ENCODE measurements at regions of chr1 and their contacts with region 1.

Region 1: DNA sequence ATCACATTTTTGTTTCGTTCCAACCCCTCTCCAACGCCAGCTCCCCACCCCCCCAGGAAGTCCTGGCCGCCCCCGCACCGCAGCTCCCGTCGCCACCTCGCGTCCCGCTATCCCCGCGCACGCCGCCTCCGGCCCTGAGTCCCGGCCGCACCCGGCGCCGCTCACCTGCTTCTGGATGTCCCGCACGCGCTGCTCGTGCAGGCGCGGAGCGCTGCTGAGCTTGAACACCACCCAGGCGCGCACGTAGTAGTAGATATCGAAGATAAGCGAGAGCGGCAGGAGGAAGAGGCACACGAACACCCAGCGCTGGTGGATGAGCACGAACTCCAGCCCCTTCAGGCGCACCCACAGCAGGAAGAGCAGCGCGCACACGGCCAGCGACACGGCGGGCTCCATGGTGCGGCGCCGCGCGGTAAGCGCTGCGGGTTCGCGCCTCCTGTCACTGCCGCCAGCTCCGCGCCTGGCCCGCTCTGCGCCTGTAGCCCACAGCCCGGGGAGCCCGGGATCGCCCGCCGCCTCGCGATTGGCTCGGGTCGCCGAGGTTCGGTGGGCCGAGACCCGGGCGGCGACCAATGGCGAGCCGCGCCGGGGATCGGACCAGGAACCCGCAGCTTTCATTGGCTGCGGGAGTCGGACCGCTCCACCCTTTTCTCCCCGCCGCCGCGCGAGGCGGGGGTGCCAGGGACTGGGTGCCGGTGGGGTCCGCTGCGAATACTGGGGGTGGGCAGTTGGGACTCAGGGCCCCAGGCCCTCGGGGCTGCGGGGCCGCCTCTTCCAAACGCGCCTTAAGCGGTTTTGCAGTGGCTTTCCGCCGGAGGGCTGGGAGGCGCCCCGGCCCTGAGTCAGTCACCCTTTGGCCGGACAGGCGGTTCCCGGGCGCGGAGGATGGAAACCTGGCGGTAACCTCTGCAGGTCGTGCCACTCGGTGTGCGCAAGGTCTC is at the start of gene DHCR24:
- DNase-seq: peak; percentile 90 to 98 (median 95)
- H3K4me3 ChIP-seq: peak within 1 kb of the TSS; percentile 64 to 98 (median 91)
- H3K27ac ChIP-seq: peak within 1 kb of the TSS; percentile 20 to 97 (median 91)
- H3K27me3 ChIP-seq: no peaks in the 10 kb centered on the region
- CTCF ChIP-seq: peak in 12 of 56 donors; percentile 6 to 38 (median 22)
- total RNA-seq, gene DHCR24: 81.5 to 336 (median 168) TPM

Region 2: DNA sequence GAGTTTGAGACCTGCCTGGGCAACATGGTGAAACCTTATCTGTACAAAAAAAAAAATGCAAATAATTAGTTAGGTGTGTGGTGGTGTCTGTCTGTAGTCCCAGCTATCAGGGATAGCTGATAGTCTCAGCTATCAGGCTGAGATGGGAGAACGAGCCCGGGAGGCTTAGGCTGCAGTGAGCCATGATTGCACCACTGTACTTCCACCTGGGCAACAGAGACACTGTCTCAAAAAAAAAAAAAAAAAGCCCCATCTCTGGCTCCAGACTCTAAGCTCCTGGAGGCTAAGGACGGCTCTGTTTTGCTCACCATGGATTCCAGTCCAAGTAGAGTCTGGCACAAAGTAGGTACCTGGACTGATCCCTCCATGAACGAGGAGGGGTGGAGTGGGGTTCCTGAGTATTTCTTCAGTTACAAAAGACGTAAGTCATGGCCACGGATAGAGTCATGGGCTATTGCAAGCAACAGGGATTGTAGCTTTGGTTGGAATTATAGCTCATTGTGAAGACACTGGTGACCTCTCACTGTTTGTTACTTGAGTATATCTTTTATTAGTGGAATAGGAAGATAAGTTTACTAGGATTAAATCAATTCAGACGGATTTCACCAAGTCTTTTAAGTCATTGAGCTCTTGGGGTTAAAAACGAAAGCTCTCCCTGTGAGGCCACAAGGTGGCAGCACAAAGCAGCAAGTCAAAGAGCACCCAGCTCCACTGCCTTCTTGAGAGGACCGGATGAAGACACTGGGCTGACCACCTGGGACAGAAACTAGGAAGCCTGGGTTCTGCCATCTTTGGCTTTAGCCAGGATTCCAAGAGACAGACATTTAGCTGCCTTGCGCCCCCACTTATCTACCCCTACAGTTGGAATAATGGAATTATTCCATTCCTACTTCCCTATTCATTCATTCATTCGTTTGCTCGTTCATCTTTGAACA is 57.9 kb after region 1 on chr1:
- intact Hi-C with region 1: loop called in 1 of 2 experiments (anchors 5 kb)
- DNase-seq: peak; percentile 57 to 81 (median 76)
- H3K4me3 ChIP-seq: peak overlapping the region in 3 of 59 donors; percentile 6 to 45 (median 17)
- H3K27ac ChIP-seq: no peak overlapping the region
- H3K27me3 ChIP-seq: no peaks in the 10 kb centered on the region
- CTCF ChIP-seq: peak; percentile 67 to 93 (median 83)

Region 3: GRCh38 chr1:55071477-55071876 is 184.5 kb after region 1 on chr1:
- intact Hi-C with region 1: loop called in 1 of 2 experiments (anchors 5 kb)
- DNase-seq: peak in 1 of 10 donors; percentile 61
- H3K4me3 ChIP-seq: no peak overlapping the region
- H3K27ac ChIP-seq: peak overlapping the region in 1 of 59 donors; percentile 59
- H3K27me3 ChIP-seq: no peaks in the 10 kb centered on the region
- CTCF ChIP-seq: peak in 26 of 56 donors; percentile 11 to 43 (median 25)

Measured in dorsolateral prefrontal cortex (tissue), 120 donors.